CD8-positive, alpha-beta T cell (primary cell): ENCODE measurements at regions of chr4 and their contacts with region 1.

Region 1: DNA sequence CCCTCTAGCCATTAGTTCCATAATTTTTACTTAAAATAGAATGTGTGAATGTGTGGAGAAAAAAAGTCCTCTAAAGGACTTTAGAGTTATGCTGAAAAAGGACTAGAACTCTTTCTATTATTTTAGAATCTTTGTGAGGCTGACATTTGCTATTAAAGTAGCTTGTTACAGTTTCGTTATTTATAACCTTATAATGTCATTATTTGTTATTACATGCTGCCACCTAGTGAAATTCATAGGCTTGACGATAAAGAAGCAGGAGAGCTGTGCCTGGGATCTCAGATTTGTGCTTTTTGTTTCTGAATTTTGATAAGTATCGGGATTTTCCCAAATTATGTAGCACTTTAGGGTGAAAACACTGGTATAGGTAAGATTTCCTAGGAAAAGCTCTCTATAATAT is 38.5 kb upstream of the TAPT1 start:
- DNase-seq: peak in 2 of 9 experiments; percentile 50 to 63
- ATAC-seq: no peak
- H3K4me3 ChIP-seq: no peak overlapping the region
- H3K4me3 Mint-ChIP-seq: no peak overlapping the region
- H3K27ac ChIP-seq: no peak overlapping the region
- H3K27ac Mint-ChIP-seq: no peak overlapping the region
- H3K4me1 ChIP-seq: no peaks in the 10 kb centered on the region
- H3K4me1 Mint-ChIP-seq: peaks cover 6% of the 10 kb centered on the region
- H3K27me3 ChIP-seq: no peaks in the 10 kb centered on the region
- H3K27me3 Mint-ChIP-seq: no peaks in the 10 kb centered on the region
- CTCF ChIP-seq: peak; percentile 69

Region 2: DNA sequence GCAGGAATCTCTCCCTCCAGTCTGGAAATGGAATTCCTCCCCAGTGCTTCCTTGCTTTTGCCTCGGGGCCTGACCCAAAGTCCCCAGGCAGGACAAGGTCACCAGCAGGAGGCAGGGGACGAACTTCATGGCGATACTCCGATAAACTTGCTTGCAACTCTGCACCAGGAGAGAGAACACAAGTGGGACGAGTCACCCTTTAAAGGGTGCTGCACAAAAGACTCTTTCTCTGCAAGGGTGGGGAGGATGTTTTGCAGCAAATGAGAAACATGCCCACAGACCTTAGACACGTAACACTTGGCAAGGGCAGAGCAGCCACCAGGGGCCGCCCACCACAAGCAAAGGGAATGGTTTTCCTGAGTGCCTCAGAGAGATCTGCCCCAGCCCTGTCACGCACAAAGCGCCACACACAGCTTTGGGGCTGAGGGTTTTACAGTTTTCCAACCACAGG is 301.8 kb before region 1 on chr4 and contains the start of gene FGFBP2:
- CTCF ChIA-PET with region 1: no interaction called
- POLR2A ChIA-PET with region 1: no interaction called
- intact Hi-C with region 1: loop called in 1 of 2 experiments (anchors 5 kb)
- DNase-seq: peak; percentile 47 to 91 (median 74)
- ATAC-seq: peak; percentile 84
- H3K4me3 ChIP-seq: peak within 1 kb of the TSS; percentile 26 to 60
- H3K4me3 Mint-ChIP-seq: peak within 1 kb of the TSS; percentile 59
- H3K27ac ChIP-seq: peak within 1 kb of the TSS; percentile 56 to 73
- H3K27ac Mint-ChIP-seq: peak within 1 kb of the TSS; percentile 83
- H3K4me1 ChIP-seq: peaks cover 27% of the 10 kb centered on the region
- H3K4me1 Mint-ChIP-seq: peaks cover 36% of the 10 kb centered on the region
- H3K27me3 ChIP-seq: no peaks in the 10 kb centered on the region
- H3K27me3 Mint-ChIP-seq: no peaks in the 10 kb centered on the region
- CTCF ChIP-seq: peak; percentile 38
- total RNA-seq, gene FGFBP2: 8.2 to 9.9 TPM

Region 3: DNA sequence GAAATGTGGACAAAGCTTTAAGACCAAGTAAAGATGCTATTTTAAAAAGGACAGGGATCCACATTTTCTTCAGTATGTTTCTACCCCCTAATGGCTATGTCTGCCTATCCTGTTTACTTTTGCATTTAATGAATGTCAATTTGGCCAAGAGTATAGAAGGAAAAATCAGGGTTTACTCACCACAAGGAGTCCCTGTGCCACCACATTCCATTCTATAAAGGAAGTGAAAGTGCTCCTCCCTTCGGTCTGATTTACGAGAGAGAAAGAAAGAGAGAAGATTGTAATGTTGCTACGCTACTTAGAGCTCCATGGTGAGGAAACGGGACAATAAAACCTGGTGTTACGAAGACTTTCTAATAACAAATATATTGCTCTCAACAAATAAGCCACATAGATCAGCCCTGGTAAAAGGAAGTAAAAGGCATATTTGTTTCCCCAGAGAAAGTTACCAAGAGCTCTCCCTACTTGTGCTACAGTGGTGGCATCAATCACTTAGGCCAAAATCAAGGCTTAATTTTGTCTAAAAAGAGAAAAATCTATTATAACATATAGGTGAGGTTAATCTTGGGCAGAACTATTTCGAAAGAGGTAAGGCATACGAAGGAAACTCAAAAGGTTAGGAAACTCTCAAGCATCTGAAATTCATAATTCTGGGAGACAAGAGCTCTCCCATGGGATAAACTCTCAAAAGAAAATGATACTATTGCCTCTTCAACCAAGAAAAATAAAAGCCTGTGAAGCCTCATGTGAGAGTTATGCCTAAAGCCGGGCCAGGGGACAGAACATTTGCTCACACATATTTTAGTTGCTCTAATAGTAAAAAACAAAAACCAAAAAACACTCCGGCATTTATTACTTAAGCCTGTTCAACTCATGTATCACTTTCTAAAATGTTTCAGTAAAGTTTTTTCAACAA is 68.1 kb before region 1 on chr4:
- CTCF ChIA-PET with region 1: interaction called, 4 read pairs
- POLR2A ChIA-PET with region 1: no interaction called
- intact Hi-C with region 1: loop called (anchors 5 kb)
- DNase-seq: peak in 1 of 9 experiments; percentile 25
- ATAC-seq: no peak
- H3K4me3 ChIP-seq: no peak overlapping the region
- H3K4me3 Mint-ChIP-seq: no peak overlapping the region
- H3K27ac ChIP-seq: no peak overlapping the region
- H3K27ac Mint-ChIP-seq: no peak overlapping the region
- H3K4me1 ChIP-seq: no peaks in the 10 kb centered on the region
- H3K4me1 Mint-ChIP-seq: peaks cover 25% of the 10 kb centered on the region
- H3K27me3 ChIP-seq: no peaks in the 10 kb centered on the region
- H3K27me3 Mint-ChIP-seq: no peaks in the 10 kb centered on the region
- CTCF ChIP-seq: no peak

Region 4: DNA sequence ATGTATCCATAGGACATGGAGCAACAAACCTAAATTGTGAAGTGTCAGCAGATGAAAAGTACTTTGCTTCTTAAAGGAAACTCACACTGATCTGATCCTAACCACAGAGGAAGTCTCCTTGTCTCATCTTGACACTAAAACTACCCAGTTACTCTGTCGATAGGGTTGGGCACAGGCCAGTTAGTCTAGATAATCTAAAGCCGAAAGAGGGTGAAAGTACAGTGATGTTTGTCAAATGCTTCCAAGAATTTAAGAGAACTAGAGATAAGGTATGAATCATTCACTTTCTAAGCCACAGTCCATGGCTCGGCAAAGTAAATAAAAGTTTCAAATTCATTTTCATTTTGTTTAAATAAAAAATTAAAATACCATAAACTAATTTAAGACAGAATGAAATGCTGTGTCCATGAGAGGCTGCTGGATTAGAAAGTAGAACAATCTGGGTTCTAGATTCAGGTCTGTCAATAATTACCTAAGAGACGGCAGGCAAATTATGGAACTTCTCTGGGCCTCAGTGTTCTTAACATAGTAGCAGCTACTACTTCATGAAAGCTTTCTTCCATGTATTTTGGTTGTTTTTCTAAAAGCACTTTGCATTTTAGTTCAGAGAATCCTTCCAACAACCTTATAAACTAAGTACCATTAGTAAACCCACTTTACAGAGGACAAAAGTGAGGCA is 457.0 kb after region 1 on chr4:
- CTCF ChIA-PET with region 1: no interaction called
- POLR2A ChIA-PET with region 1: no interaction called
- intact Hi-C with region 1: no loop called
- DNase-seq: peak in 1 of 9 experiments; percentile 3
- ATAC-seq: no peak
- H3K4me3 ChIP-seq: no peak overlapping the region
- H3K4me3 Mint-ChIP-seq: no peak overlapping the region
- H3K27ac ChIP-seq: no peak overlapping the region
- H3K27ac Mint-ChIP-seq: no peak overlapping the region
- H3K4me1 ChIP-seq: no peaks in the 10 kb centered on the region
- H3K4me1 Mint-ChIP-seq: no peaks in the 10 kb centered on the region
- H3K27me3 ChIP-seq: no peaks in the 10 kb centered on the region
- H3K27me3 Mint-ChIP-seq: no peaks in the 10 kb centered on the region
- CTCF ChIP-seq: no peak

Region 5: GRCh38 chr4:16764622-16765021 is 499.8 kb after region 1 on chr4:
- CTCF ChIA-PET with region 1: no interaction called
- POLR2A ChIA-PET with region 1: no interaction called
- intact Hi-C with region 1: no loop called
- DNase-seq: no peak
- ATAC-seq: no peak
- H3K4me3 ChIP-seq: no peak overlapping the region
- H3K4me3 Mint-ChIP-seq: no peak overlapping the region
- H3K27ac ChIP-seq: no peak overlapping the region
- H3K27ac Mint-ChIP-seq: no peak overlapping the region
- H3K4me1 ChIP-seq: no peaks in the 10 kb centered on the region
- H3K4me1 Mint-ChIP-seq: no peaks in the 10 kb centered on the region
- H3K27me3 ChIP-seq: no peaks in the 10 kb centered on the region
- H3K27me3 Mint-ChIP-seq: peaks cover 2% of the 10 kb centered on the region
- CTCF ChIP-seq: no peak